Activated CD4-positive, alpha-beta T cell treated with anti-CD3 and anti-CD28 coated beads for 36 hours (primary cell): ENCODE measurements at regions of chr19 and their contacts with region 1.

Region 1: GRCh38 chr19:45643024-45643926 is 4.1 kb upstream of the EML2 start:
- DNase-seq: peak; percentile 97
- ATAC-seq: peak; percentile 54
- H3K4me3 Mint-ChIP-seq: peak overlapping the region; percentile 94
- H3K27ac Mint-ChIP-seq: peak overlapping the region; percentile 93
- H3K4me1 Mint-ChIP-seq: peaks cover 57% of the 10 kb centered on the region
- H3K27me3 Mint-ChIP-seq: no peaks in the 10 kb centered on the region

Region 2: DNA sequence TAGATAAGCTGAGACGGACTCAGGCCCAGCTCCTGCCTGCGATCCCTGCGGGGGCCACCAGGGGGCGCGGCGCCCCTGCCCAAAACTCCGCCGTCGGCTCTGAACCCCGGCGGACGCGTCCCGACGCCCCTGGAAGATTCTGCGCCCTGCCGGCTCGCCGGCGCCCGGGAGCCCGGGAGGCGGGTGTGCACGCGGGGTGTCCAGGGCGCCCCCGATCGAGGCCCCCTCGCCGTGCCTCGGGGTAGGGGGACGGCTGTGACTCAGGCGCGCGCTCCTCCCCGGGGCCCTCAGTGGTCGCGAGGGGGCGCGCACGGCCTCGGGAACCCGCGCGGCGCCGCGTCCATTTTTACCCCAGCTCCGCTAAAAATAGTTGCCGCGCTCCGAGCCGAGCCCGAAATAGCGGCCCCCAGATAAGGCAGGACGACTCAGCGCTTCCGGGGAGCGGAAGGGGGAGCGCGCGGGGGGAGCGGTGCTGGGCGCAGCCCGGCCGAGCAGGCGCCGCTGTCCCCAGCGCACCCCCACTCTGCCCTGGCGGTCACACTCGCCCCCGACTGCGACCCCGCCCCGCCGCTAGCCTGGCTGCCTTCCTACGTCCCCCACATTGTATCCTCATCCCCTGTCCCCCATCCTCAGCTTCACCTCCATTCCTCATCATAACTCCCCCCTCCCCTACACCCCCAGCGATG is 203.6 kb before region 1 on chr19:
- CTCF ChIA-PET with region 1: interaction called, 5 read pairs
- POLR2A ChIA-PET with region 1: interaction called, 10 read pairs
- intact Hi-C with region 1: loop called in 1 of 2 experiments (anchors 1 kb)
- DNase-seq: peak; percentile 90
- ATAC-seq: peak; percentile 70
- H3K4me3 Mint-ChIP-seq: peak overlapping the region; percentile 56
- H3K27ac Mint-ChIP-seq: peak overlapping the region; percentile 63
- H3K4me1 Mint-ChIP-seq: peaks cover 33% of the 10 kb centered on the region
- H3K27me3 Mint-ChIP-seq: no peaks in the 10 kb centered on the region

Region 3: DNA sequence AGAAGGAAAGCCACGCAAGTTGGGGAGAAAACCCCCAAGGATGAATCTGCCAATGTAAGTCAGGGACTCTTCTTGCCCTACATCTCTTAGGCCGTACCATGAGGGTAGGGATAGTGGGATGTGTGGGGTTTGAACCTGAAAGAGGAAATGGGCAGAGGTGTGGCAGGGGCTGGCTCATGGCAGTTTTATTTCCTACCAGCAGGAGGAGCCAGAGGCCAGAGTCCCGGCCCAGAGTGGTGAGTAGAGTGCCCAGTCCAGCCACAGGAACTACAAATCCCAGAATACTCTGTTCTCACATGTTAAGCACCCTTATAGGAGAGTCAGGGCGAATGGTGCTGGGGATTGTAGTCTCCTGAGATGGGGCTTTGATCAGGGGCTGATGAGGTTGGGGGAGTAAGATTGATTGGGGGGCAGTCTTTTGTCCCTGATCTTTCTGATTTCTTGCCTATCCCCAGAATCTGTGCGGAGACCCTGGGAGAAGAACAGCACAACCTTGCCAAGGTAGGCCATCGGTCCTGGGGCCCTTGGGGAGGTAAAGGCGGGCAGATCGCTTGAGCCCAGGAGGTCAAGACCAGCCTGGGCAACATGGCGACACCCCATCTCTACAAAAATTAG is 119.5 kb before region 1 on chr19:
- CTCF ChIA-PET with region 1: interaction called, 3 read pairs
- POLR2A ChIA-PET with region 1: no interaction called
- intact Hi-C with region 1: loop called (anchors 1 to 2 kb)
- DNase-seq: peak; percentile 84
- ATAC-seq: peak; percentile 99
- H3K4me3 Mint-ChIP-seq: no peak overlapping the region
- H3K27ac Mint-ChIP-seq: peak overlapping the region; percentile 19
- H3K4me1 Mint-ChIP-seq: peaks cover 14% of the 10 kb centered on the region
- H3K27me3 Mint-ChIP-seq: peaks cover 2% of the 10 kb centered on the region

Region 4: DNA sequence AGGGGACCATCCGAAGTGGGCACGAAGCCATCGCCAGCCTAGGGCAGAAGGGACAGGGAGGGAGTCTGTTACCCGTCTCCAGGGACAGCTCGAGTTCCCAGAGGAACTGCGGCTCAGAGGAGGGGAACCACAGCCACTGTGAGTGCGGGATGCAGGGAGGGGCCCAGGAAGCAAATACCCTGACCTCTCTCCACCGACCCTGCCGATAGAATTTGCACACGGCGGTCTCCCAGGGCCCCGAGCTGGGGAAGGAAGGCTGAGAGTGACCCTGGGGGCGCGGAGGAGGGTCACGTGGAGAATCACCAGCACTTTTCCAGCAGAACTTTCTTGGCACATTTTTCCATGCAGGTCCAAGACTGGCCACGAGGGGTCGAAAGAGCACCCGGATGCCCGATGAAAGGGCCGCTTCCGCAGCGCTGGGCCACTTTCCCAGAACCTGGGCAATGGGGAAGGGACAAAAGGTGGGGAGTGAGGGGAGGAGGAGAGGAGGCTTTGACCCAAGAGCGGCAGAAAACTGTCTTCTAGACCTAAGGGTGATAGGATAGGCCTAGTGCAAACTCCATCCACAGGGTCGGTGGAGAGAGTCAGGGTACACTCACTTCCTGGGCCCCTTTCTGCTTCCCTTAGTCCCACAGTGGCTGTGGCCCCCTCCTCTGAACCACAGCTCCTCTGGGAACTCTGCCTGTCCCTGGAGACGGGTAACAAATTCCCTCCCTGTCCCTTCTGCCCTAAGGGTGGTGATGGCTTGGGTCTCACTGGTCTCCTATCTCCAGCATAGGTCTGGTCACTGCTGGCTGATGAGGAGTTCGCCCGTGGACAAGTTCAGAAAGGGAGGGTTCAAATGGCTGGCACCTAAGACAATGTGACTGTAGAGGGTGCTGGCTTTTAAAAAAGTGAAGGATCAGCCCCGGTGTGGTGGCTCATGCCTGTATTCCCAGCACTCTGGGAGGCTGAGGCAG is 35.9 kb before region 1 on chr19:
- CTCF ChIA-PET with region 1: interaction called, 3 read pairs
- POLR2A ChIA-PET with region 1: no interaction called
- intact Hi-C with region 1: loop called (anchors 1 kb)
- DNase-seq: peak; percentile 68
- ATAC-seq: peak; percentile 64
- H3K4me3 Mint-ChIP-seq: no peak overlapping the region
- H3K27ac Mint-ChIP-seq: peak overlapping the region; percentile 77
- H3K4me1 Mint-ChIP-seq: peaks cover 16% of the 10 kb centered on the region
- H3K27me3 Mint-ChIP-seq: peaks cover 7% of the 10 kb centered on the region

Region 5: DNA sequence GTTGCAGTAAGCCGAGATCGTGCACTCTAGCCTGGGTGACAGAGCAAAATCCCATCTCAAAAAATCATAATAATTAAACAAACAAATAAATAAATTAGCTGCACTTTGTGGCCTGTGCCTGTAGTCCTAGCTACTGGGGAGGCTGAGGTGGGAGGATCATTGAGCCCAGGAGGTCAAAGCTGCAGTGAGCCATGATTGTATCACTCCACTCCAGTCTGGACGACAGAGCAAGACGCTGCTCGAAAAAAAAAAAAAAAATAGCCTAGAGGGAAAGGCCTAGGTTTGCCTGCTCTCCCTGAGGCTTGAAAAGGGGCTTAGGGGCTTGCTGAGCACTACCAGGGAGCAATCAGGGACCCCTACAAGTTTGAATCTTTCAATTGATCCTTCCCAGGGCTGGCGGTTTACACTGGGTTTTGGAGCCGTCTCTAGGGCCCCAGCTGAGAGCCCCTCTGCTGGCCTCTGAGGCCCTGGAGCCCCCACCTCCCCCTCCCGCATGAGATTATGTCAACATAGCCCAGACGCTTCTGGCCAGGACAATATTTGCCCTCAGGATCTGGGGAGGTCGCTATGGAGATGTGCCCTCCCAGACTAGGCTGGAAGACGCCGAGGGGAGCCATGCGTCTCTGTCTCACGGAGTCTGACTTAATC is 14.4 kb after region 1 on chr19:
- CTCF ChIA-PET with region 1: no interaction called
- POLR2A ChIA-PET with region 1: no interaction called
- intact Hi-C with region 1: no loop called
- DNase-seq: no peak
- ATAC-seq: no peak
- H3K4me3 Mint-ChIP-seq: no peak overlapping the region
- H3K27ac Mint-ChIP-seq: no peak overlapping the region
- H3K4me1 Mint-ChIP-seq: no peaks in the 10 kb centered on the region
- H3K27me3 Mint-ChIP-seq: peaks cover 13% of the 10 kb centered on the region

Region 6: GRCh38 chr19:45670670-45671453 is 27.6 kb after region 1 on chr19:
- CTCF ChIA-PET with region 1: interaction called, 5 read pairs
- POLR2A ChIA-PET with region 1: interaction called, 3 read pairs
- intact Hi-C with region 1: loop called in 1 of 2 experiments (anchors 1 kb)
- DNase-seq: peak; percentile 89
- ATAC-seq: peak; percentile 39
- H3K4me3 Mint-ChIP-seq: peak overlapping the region; percentile 18
- H3K27ac Mint-ChIP-seq: no peak overlapping the region
- H3K4me1 Mint-ChIP-seq: peaks cover 24% of the 10 kb centered on the region
- H3K27me3 Mint-ChIP-seq: peaks cover 18% of the 10 kb centered on the region

Region 7: GRCh38 chr19:45770192-45771101 is 127.2 kb after region 1 on chr19:
- CTCF ChIA-PET with region 1: no interaction called
- POLR2A ChIA-PET with region 1: interaction called, 3 read pairs
- intact Hi-C with region 1: loop called in 1 of 2 experiments (anchors 1 kb)
- DNase-seq: peak; percentile 93
- ATAC-seq: peak; percentile 68
- H3K4me3 Mint-ChIP-seq: peak overlapping the region; percentile 78
- H3K27ac Mint-ChIP-seq: no peak overlapping the region
- H3K4me1 Mint-ChIP-seq: peaks cover 10% of the 10 kb centered on the region
- H3K27me3 Mint-ChIP-seq: peaks cover 10% of the 10 kb centered on the region